ENCODE measurements at regions of chr2 and their contacts with region 1.

Region 1: DNA sequence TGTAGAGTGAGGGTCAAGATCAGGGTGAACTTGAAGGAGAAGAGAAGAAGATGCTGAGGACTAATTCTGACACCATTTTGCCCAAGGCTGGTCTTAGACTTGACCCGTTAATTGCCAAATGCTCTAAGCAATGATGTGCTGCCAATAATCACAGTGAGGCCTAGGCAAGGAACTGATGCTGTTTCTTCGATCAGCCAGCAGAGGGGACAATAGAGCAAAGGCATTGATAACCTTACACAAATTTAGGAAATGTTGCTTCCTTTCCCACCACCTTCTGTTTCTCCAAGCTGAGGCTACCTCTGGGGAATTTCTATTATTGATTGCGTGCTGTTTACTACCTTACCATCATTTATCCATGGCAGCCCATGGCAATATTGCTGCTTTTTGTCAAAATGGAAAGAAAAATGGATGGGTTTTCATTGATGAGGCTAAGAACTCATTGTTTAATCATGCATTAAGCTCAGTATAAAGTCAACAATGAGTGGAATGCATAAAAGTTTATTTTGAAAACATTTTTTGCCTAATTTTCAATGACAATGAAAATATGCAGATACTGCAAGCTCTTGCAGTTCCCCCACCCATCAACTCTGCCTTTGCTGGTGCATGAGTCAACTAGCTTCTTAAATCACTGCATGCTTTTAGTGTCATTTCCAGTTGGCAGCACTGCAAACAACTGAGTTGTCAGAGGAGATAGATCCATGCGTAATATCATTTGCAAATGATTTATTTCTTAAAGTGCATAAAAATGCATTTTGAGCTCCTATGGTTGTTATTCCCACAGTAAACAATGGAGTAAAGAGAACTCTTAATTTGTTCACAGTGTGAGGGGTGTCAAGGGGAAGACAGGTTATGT is 116.4 kb upstream of the NYAP2 start:
- DNase-seq: peak in 1 of 4 donors; percentile 7
- ATAC-seq: peak; percentile 71
- H3K4me3 ChIP-seq: no peak overlapping the region
- H3K27ac ChIP-seq: no peak overlapping the region
- H3K4me1 ChIP-seq: no peaks in the 10 kb centered on the region
- H3K27me3 ChIP-seq: no peaks in the 10 kb centered on the region
- CTCF ChIP-seq: peak; percentile 45

Region 2: DNA sequence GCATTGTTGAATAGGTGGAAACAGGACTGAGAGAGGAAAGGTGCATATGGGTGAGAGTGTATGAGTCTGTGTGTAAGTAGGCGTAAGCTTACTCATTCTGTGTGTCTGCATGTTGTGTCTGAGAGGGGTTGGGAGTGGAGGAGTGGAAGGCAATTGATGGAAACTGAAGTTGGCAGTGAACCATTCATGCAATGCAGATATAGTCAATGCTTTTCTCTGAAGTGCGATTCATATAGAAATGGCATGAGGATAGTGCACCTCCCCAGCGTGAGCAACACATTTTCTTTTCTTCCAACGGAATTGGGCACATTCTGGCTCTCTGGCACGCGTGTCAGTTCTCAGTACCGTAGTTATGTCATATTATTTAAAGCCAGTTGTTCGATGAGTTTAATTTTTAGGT is 367.0 kb after region 1 on chr2:
- intact Hi-C with region 1: loop called in 1 of 2 experiments (anchors 10 kb)
- DNase-seq: no peak
- ATAC-seq: no peak
- H3K4me3 ChIP-seq: no peak overlapping the region
- H3K27ac ChIP-seq: no peak overlapping the region
- H3K4me1 ChIP-seq: no peaks in the 10 kb centered on the region
- H3K27me3 ChIP-seq: no peaks in the 10 kb centered on the region
- CTCF ChIP-seq: no peak

Measured in left lung (tissue), 14 donors.